Ascending aorta (tissue), 2 donors: ENCODE measurements at regions of chr12 and their contacts with region 1.

Region 1: DNA sequence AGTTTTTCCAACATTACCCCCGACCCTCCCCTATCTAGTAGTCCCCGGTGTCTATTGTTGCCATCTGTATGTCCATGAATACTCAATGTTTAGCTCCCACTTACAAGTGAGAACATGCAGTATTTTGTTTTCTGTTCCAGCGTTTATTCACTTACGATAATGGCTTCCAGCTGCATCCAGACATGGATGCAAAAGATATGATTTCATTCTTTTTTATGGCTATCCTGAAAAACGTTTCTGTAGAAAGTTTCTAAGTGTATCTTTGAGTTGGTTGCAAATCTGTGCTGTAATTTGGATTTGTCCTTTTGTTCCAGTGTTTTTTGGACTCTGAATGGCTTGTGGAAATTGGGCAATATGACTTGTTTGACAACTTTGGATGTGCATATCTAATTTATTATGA is 11.8 kb downstream of the SP1 start:
- DNase-seq: no peak
- H3K4me3 ChIP-seq: peak overlapping the region in 1 of 2 donors; percentile 4
- H3K27ac ChIP-seq: peak overlapping the region; percentile 76 to 83
- H3K4me1 ChIP-seq: peaks cover 0 to 41% of the 10 kb centered on the region in 2 donors
- H3K27me3 ChIP-seq: no peaks in the 10 kb centered on the region
- CTCF ChIP-seq: no peak

Region 2: DNA sequence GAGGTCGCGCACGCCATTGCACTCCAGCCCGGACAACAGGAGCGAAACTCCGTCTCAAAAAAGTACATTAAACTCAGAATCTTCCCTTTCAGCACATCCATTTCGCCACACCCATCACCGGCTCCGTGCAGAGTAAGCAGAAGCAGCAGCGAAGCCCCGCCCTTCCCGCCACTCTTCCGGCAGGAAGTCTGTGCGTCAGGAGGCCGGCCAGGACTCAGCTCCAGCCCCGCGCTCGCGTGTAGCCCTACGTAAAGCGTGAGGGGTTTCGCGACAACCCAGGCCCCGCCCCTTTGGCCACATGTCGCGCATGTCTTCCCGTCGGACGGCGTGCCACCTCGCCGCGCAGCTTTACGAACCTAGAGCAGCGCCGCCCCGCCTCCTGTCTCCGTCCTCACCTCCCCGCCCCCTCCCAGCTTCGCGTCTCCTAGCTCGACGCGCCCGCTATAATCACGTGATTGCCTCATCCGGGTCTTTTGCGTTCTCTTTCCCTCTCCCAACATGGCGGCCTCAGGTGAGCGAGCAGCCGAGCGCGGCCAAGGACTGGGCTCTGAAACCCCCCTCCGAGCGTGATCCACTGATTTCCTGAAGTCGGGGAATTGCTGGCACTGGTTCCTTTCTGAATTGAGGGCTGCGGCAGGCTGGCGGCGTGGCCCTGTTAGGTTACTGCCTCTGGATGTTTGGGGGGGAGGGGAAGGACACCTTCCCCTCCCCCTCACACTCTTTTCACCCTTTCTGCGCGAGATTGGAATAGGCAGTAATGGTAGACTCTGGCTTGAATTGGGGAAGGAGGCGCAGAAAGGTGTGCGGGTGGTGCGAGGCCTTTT is 385.5 kb before region 1 on chr12 and contains the start of gene EIF4B:
- intact Hi-C with region 1: no loop called
- DNase-seq: peak; percentile 98 to 100
- H3K4me3 ChIP-seq: peak within 1 kb of the TSS; percentile 84 to 89
- H3K27ac ChIP-seq: peak within 1 kb of the TSS; percentile 79 to 87
- H3K4me1 ChIP-seq: peaks cover 14 to 28% of the 10 kb centered on the region in 2 donors
- H3K27me3 ChIP-seq: no peaks in the 10 kb centered on the region
- CTCF ChIP-seq: no peak
- total RNA-seq, gene EIF4B: 181 TPM

Region 3: GRCh38 chr12:53419761-53420160 is 28.0 kb after region 1 on chr12:
- intact Hi-C with region 1: loop called (anchors 2 kb)
- DNase-seq: no peak
- H3K4me3 ChIP-seq: no peak overlapping the region
- H3K27ac ChIP-seq: no peak overlapping the region
- H3K4me1 ChIP-seq: peaks cover 0 to 9% of the 10 kb centered on the region in 2 donors
- H3K27me3 ChIP-seq: no peaks in the 10 kb centered on the region
- CTCF ChIP-seq: no peak